OCI-LY7 (cell line): ENCODE measurements at regions of chr5 and their contacts with region 1.

Region 1: DNA sequence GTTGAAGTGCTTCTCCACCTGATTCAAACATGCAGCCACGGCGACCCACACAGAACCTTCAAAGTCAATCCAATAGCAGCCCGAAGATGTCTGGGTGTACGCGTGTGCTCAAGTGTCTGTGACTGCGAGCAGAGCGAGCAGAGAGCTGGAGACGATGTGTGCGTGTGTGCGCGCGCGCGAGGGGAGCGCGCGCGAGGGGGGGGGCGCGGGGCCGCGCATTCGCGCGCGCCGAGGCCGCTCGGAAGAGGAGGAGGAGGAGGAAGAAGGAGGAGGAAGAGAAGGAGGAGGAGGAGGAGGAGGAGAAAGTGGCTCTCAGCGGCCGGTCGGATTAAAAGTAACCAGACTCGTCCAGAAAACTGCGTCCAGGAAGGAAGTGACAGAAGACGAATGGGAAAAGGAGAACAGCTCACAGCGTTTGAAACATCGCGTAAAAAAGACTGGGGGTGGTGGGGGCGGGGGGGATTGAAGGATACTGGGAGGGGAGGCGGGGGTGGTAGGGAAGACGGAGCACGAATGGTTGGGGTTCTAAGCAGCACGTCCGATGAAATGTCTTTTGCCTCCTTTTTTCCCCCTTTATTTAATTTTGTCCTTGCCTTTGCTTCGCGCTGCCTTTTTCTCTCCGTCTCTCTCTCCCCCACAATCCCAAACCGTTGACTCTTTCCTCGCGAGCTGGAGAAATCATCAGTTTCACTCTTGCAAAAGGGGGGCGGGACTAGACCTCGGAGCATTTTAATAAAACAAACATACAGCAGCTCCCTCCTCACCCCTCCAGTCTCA is at the start of gene MEF2C:
- DNase-seq: peak; percentile 78
- H3K4me3 ChIP-seq: peak within 1 kb of the TSS; percentile 73
- H3K27ac ChIP-seq: peak within 1 kb of the TSS; percentile 2
- H3K4me1 ChIP-seq: peaks cover 39% of the 10 kb centered on the region
- CTCF ChIP-seq: no peak
- total RNA-seq, gene MEF2C: 5.5 and 9.5 TPM in 2 replicates

Region 2: GRCh38 chr5:88268385-88269184 is 614.7 kb before region 1 on chr5 and contains the start of gene TMEM161B:
- CTCF ChIA-PET with region 1: no interaction called
- POLR2A ChIA-PET with region 1: no interaction called
- intact Hi-C with region 1: loop called (anchors 5 kb)
- DNase-seq: peak; percentile 95
- H3K4me3 ChIP-seq: peak within 1 kb of the TSS; percentile 90
- H3K27ac ChIP-seq: peak within 1 kb of the TSS; percentile 74
- H3K4me1 ChIP-seq: peaks cover 37% of the 10 kb centered on the region
- CTCF ChIP-seq: no peak
- total RNA-seq, gene TMEM161B: 17.2 and 20.3 TPM in 2 replicates